ENCODE measurements at regions of chr3 and their contacts with region 1.

Region 1: DNA sequence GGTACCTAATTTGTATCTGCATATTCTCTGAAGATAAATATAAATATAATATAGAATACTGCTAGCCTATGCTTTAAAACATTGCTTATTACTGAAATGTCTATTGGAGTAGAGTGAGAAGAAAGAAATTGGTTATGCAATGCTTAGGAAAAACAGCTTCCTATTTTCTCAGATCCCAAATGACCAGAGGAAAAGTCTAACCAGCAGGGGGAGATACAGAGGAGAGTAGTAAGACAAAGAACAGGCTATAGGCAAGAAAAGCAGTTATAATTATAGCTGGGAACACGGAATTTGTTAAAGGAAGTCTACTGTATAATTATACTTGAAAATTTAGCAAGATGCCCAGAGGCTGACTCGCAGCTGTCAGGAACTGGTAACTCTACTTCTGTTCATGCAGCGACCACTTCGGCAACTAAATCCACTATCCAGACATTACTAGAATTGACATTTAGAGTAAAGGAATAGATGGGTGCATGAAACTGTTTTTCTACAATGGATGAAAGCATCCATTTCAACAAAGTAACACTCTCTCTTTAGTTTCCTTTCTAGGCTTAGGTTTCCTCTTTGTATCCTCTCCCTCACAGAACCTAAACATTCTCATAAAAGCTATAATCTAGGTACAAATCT is 97.2 kb downstream of the TBC1D5 start:
- DNase-seq: no peak
- H3K4me3 ChIP-seq: no peak overlapping the region
- H3K27ac ChIP-seq: no peak overlapping the region
- H3K4me1 ChIP-seq: peaks cover 0 to 4% of the 10 kb centered on the region in 2 donors
- H3K27me3 ChIP-seq: no peaks in the 10 kb centered on the region
- CTCF ChIP-seq: peak; percentile 17 to 76 (median 52)
- POLR2A ChIP-seq: no peak

Region 2: DNA sequence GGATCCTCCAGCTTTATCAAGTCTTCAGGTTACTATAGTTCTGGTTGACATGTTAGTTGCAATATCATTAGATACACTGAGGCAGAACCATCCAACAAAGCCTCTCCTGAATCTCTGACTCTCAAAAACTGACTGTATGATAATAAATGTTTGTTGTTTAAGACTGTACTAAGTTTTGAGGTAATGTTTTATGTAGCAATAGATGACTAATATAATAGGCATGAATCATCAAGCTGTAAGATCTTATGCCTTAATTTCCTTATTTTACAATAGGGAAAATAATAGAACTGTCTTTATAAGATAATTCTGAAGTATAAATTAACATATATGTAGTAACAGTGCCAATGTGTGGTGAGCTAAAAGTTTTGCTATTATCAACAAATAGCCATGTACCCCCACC is 186.2 kb after region 1 on chr3:
- intact Hi-C with region 1: loop called (anchors 10 kb)
- DNase-seq: no peak
- H3K4me3 ChIP-seq: no peak overlapping the region
- H3K27ac ChIP-seq: no peak overlapping the region
- H3K4me1 ChIP-seq: no peaks in the 10 kb centered on the region
- H3K27me3 ChIP-seq: no peaks in the 10 kb centered on the region
- CTCF ChIP-seq: no peak
- POLR2A ChIP-seq: no peak

Region 3: GRCh38 chr3:17882981-17883380 is 237.8 kb after region 1 on chr3:
- intact Hi-C with region 1: no loop called
- DNase-seq: no peak
- H3K4me3 ChIP-seq: no peak overlapping the region
- H3K27ac ChIP-seq: no peak overlapping the region
- H3K4me1 ChIP-seq: no peaks in the 10 kb centered on the region
- H3K27me3 ChIP-seq: no peaks in the 10 kb centered on the region
- CTCF ChIP-seq: no peak
- POLR2A ChIP-seq: no peak

Measured in thyroid gland (tissue), 4 donors.